Activated CD4-positive, alpha-beta T cell treated with anti-CD3 and anti-CD28 coated beads for 36 hours (primary cell): ENCODE measurements at regions of chr16 and their contacts with region 1.

Region 1: GRCh38 chr16:77190478-77191258 is at the start of gene MON1B:
- DNase-seq: peak; percentile 96
- ATAC-seq: peak; percentile 99
- H3K4me3 Mint-ChIP-seq: peak within 1 kb of the TSS; percentile 99
- H3K27ac Mint-ChIP-seq: peak within 1 kb of the TSS; percentile 98
- H3K4me1 Mint-ChIP-seq: peaks cover 29% of the 10 kb centered on the region
- H3K27me3 Mint-ChIP-seq: peaks cover 2% of the 10 kb centered on the region
- total RNA-seq, gene MON1B: 58.0 to 63.4 TPM

Region 2: DNA sequence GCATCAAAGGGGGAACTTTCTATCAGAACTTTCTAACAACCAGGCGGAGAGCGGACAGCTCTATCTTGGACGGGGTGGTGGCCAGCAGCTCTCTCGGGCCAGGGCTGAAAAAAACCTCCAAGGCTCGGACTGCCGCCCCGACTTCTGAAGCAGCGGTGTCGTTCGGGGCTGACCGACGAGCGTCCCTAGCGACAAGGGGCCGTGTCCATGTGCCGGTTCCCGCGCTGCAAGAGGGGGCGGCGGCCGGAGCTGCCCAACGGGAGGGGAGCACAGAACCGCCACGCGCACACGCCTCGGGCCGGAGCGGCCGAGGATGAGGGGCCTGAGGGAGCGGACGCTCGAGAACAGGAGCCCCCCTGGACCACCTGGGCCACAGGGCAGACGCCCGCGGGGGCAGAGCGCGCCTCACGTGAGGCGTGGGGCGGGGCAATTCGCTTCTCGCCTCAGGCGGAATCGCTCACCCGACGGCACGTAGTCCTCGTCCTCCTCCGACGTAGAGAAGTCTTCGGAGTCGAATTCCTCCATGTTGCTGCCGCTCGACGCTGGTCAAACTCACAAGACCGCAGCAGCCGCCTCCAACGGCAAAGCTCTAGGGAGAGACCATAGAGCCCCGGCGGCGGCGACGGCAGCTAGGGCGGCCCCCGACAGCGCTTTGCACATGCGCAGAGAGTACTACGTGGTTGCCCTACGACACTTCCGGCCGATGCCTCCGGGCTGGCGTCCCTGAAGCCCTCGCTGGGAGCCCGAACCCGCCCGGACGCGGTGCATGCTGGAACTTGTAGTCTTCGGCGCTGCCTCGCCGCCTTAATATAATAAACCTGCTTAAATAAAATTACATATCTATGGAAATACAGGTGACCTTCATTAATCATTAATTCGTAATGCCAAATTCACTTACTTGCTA is 1757.6 kb before region 1 on chr16 and contains the start of gene CFDP1:
- CTCF ChIA-PET with region 1: no interaction called
- POLR2A ChIA-PET with region 1: no interaction called
- intact Hi-C with region 1: loop called in 1 of 2 experiments (anchors 1 kb)
- DNase-seq: peak; percentile 97
- ATAC-seq: peak; percentile 94
- H3K4me3 Mint-ChIP-seq: peak within 1 kb of the TSS; percentile 92
- H3K27ac Mint-ChIP-seq: peak within 1 kb of the TSS; percentile 95
- H3K4me1 Mint-ChIP-seq: peaks cover 39% of the 10 kb centered on the region
- H3K27me3 Mint-ChIP-seq: no peaks in the 10 kb centered on the region
- total RNA-seq, gene CFDP1: 44.0 to 48.2 TPM

Region 3: GRCh38 chr16:75519881-75520280 is 1670.8 kb before region 1 on chr16:
- CTCF ChIA-PET with region 1: no interaction called
- POLR2A ChIA-PET with region 1: no interaction called
- intact Hi-C with region 1: loop called (anchors 1 to 5 kb)
- DNase-seq: no peak
- ATAC-seq: no peak
- H3K4me3 Mint-ChIP-seq: no peak overlapping the region
- H3K27ac Mint-ChIP-seq: no peak overlapping the region
- H3K4me1 Mint-ChIP-seq: peaks cover 7% of the 10 kb centered on the region
- H3K27me3 Mint-ChIP-seq: no peaks in the 10 kb centered on the region

Region 4: GRCh38 chr16:75566040-75566810 is 1624.4 kb before region 1 on chr16 and contains the start of gene GABARAPL2:
- CTCF ChIA-PET with region 1: interaction called, 3 read pairs
- POLR2A ChIA-PET with region 1: no interaction called
- intact Hi-C with region 1: loop called in 1 of 2 experiments (anchors 1 kb)
- DNase-seq: peak; percentile 94
- ATAC-seq: peak; percentile 72
- H3K4me3 Mint-ChIP-seq: peak within 1 kb of the TSS; percentile 82
- H3K27ac Mint-ChIP-seq: peak within 1 kb of the TSS; percentile 86
- H3K4me1 Mint-ChIP-seq: peaks cover 44% of the 10 kb centered on the region
- H3K27me3 Mint-ChIP-seq: peaks cover 10% of the 10 kb centered on the region
- total RNA-seq, gene GABARAPL2: 31.9 to 58.0 TPM

Region 5: GRCh38 chr16:77211880-77212740 is 21.4 kb after region 1 on chr16:
- CTCF ChIA-PET with region 1: interaction called, 3 read pairs
- POLR2A ChIA-PET with region 1: interaction called, 3 read pairs
- intact Hi-C with region 1: loop called (anchors 1 kb)
- DNase-seq: peak; percentile 88
- ATAC-seq: peak; percentile 85
- H3K4me3 Mint-ChIP-seq: peak overlapping the region; percentile 71
- H3K27ac Mint-ChIP-seq: peak overlapping the region; percentile 57
- H3K4me1 Mint-ChIP-seq: peaks cover 13% of the 10 kb centered on the region
- H3K27me3 Mint-ChIP-seq: no peaks in the 10 kb centered on the region

Region 6: GRCh38 chr16:77722309-77723107 is 531.8 kb after region 1 on chr16 and contains the start of gene NUDT7:
- CTCF ChIA-PET with region 1: no interaction called
- POLR2A ChIA-PET with region 1: no interaction called
- intact Hi-C with region 1: loop called (anchors 1 to 5 kb)
- DNase-seq: peak; percentile 100
- ATAC-seq: peak; percentile 97
- H3K4me3 Mint-ChIP-seq: peak within 1 kb of the TSS; percentile 80
- H3K27ac Mint-ChIP-seq: peak within 1 kb of the TSS; percentile 77
- H3K4me1 Mint-ChIP-seq: peaks cover 13% of the 10 kb centered on the region
- H3K27me3 Mint-ChIP-seq: no peaks in the 10 kb centered on the region
- total RNA-seq, gene NUDT7: 9.8 to 11.4 TPM

Region 7: GRCh38 chr16:77987810-77988209 is 797.1 kb after region 1 on chr16:
- CTCF ChIA-PET with region 1: no interaction called
- POLR2A ChIA-PET with region 1: no interaction called
- intact Hi-C with region 1: no loop called
- DNase-seq: no peak
- ATAC-seq: no peak
- H3K4me3 Mint-ChIP-seq: no peak overlapping the region
- H3K27ac Mint-ChIP-seq: no peak overlapping the region
- H3K4me1 Mint-ChIP-seq: no peaks in the 10 kb centered on the region
- H3K27me3 Mint-ChIP-seq: peaks cover 11% of the 10 kb centered on the region